ENCODE measurements at regions of chr22 and their contacts with region 1.

Region 1: DNA sequence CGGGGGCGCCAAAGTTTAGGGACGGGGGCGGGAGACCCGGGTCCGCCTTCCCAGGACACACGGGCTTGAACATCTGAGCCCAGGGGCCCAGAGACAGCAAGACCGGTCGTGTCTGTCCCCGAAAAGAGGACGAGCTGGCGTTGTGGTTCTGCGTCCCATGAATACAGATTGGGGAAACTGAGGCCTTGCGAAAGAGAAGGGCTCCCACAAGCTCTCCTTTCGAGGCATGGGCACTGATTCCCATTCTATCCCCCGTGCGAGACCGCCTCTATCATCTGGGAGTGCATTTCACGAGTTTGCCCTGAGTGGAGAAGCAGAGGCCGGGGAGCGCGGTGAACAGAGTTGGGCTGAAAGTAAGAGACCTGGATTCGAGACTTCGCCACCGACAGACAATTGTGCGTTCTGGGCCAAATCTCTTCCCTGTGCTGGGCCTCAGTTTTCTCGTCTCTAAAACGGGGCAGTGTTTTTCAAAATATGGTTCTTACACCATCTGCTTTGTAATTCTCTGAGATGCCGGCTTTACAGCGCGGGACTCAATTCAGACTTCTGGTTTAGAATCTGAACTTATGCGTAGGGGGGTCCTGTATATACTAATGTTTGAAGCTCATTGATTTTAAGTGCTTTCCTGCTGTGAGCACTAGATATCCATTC is 471 bp downstream of the RNF185 start:
- DNase-seq: no peak
- ATAC-seq: peak; percentile 60 to 64
- H3K4me3 ChIP-seq: peak overlapping the region; percentile 72 to 98 (median 87)
- H3K27ac ChIP-seq: peak overlapping the region; percentile 95 to 99 (median 97)
- H3K4me1 ChIP-seq: peaks cover 24 to 38% of the 10 kb centered on the region in 2 donors
- H3K27me3 ChIP-seq: no peaks in the 10 kb centered on the region
- CTCF ChIP-seq: no peak
- POLR2A ChIP-seq: no peak

Region 2: DNA sequence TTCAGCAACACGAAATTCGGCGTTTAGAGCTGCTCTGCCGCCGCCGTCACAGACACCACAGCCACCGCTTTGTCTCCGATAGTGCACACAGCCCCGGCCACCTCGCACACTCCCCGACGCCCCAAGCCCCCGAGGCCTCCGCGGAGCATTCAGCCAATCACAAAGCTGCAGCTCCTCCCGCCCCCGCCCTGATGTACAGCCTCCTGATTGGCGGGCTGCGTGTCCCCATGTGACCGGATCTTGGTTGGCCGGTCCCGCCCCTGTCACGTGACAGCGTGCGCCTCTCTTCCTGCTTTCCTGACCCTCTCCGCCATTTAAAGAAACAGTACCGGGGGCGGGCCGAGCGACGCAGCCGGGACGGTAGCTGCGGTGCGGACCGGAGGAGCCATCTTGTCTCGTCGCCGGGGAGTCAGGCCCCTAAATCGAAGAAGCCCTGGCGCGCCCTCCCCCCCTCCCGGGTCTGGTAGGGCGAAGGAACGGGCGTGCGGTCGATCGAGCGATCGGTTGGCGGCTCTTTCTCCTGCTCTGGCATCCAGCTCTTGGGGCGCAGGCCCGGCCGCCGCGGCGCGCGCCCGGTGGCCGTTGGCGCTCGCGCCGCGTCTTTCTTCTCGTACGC is 191.4 kb before region 1 on chr22 and contains the start of gene TUG1:
- in situ Hi-C with region 1: no loop called
- intact Hi-C with region 1: loop called (anchors 5 kb)
- DNase-seq: peak; percentile 99
- ATAC-seq: peak; percentile 91 to 94
- H3K4me3 ChIP-seq: peak within 1 kb of the TSS; percentile 61 to 95 (median 88)
- H3K27ac ChIP-seq: peak within 1 kb of the TSS; percentile 89 to 98 (median 98)
- H3K4me1 ChIP-seq: peaks cover 67 to 69% of the 10 kb centered on the region in 2 donors
- H3K27me3 ChIP-seq: no peaks in the 10 kb centered on the region
- CTCF ChIP-seq: peak in 2 of 5 experiments; percentile 32 to 33
- POLR2A ChIP-seq: peak; percentile 93 to 97
- total RNA-seq, gene TUG1: 14.3 to 23.9 (median 15.8) TPM

Region 3: GRCh38 chr22:31107178-31107893 is 53.1 kb before region 1 on chr22 and contains the start of gene SELENOM:
- in situ Hi-C with region 1: no loop called
- intact Hi-C with region 1: loop called (anchors 1 kb)
- DNase-seq: peak; percentile 96 to 97
- ATAC-seq: peak; percentile 92 to 94
- H3K4me3 ChIP-seq: peak within 1 kb of the TSS; percentile 68 to 81 (median 80)
- H3K27ac ChIP-seq: peak within 1 kb of the TSS; percentile 93 to 98 (median 96)
- H3K4me1 ChIP-seq: peaks cover 22 to 30% of the 10 kb centered on the region in 2 donors
- H3K27me3 ChIP-seq: no peaks in the 10 kb centered on the region
- CTCF ChIP-seq: peak; percentile 89 to 97 (median 94)
- POLR2A ChIP-seq: peak; percentile 85 to 87
- total RNA-seq, gene SELENOM: 144 to 184 (median 157) TPM